ENCODE measurements at regions of chr15 and their contacts with region 1.

Region 1: DNA sequence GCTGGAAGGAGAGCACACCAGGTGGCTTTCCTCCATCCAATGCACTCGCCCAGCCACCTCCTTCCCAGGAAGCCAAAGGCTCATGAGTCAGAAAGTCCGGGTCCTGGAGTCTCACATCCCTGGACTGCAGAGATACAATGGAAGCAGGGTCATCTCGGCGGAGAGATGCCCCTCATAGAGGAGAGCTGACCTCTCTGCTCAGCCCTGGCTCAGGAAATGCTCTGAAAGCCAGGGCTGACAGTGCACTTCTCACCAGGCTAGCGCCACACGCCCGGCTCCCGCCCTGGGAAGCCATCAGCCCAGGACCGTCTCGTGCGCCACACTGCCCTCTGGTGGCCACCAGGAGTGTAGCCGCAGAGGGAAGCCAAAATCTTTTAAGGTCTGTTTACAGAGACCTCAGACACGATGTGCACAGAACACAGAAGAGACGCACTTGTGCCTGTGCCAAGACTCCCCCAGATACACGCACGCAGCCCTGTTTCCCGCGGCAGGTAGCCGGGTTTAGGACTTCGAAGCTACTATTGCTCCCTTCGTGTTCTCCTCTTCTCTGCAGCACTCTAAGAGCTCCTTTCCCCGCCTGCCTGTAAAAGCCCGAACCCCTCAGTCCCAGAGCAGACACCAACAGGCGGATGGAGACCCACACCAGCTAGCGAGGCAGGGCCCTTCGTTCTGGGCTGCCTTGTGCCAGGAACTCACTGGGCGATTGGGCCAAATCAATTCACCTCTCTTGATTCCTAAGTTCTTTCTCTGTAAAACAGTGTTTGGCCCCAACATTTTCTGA is 9.7 kb downstream of the NTRK3 start:
- DNase-seq: peak; percentile 86
- ATAC-seq: peak; percentile 89

Region 2: DNA sequence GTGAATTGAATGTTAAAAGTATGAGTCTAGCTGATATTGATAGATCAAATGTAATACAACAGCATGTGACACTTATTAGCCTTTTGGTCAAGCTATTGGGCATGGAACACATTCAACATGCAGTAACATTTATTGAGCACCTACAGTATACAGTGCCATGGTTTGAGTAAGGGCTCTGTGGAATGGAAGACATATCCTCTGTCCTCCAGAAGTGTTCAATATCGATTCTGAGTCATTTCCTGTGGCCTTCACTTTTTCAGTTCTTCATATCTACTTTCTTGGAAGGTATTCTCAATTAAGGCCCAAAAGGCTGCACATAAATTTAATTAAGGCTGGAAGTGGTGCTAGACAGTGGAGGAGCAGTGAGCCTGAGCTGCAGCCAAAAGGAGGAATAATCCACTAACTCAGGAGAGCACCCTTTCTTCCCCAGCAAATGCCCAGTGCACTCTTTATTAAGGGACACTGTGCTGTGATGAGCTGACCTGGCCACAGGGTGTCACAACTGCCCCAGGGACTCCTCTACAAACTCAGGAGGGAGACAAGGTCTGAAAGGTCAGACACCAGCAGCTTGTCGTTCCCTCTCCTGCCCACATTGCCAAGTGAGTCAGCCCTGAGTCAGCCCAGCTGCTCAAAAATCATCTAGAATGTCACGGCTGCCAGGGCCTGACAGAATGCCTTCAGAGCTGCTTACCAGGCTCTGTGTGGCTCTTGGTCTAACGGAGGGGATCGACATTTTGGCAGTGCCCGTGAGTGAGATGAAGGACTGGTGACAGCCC is 1622.4 kb before region 1 on chr15:
- intact Hi-C with region 1: loop called (anchors 10 kb)
- DNase-seq: peak; percentile 80
- ATAC-seq: peak; percentile 99

Region 3: GRCh38 chr15:86915811-86916331 is 1331.0 kb before region 1 on chr15:
- intact Hi-C with region 1: loop called (anchors 10 kb)
- DNase-seq: no peak
- ATAC-seq: peak; percentile 79

Region 4: GRCh38 chr15:87672309-87673288 is 574.3 kb before region 1 on chr15:
- intact Hi-C with region 1: loop called (anchors 10 kb)
- DNase-seq: no peak
- ATAC-seq: peak; percentile 56